SK-N-SH (cell line): ENCODE measurements at regions of chr1 and their contacts with region 1.

Region 1: DNA sequence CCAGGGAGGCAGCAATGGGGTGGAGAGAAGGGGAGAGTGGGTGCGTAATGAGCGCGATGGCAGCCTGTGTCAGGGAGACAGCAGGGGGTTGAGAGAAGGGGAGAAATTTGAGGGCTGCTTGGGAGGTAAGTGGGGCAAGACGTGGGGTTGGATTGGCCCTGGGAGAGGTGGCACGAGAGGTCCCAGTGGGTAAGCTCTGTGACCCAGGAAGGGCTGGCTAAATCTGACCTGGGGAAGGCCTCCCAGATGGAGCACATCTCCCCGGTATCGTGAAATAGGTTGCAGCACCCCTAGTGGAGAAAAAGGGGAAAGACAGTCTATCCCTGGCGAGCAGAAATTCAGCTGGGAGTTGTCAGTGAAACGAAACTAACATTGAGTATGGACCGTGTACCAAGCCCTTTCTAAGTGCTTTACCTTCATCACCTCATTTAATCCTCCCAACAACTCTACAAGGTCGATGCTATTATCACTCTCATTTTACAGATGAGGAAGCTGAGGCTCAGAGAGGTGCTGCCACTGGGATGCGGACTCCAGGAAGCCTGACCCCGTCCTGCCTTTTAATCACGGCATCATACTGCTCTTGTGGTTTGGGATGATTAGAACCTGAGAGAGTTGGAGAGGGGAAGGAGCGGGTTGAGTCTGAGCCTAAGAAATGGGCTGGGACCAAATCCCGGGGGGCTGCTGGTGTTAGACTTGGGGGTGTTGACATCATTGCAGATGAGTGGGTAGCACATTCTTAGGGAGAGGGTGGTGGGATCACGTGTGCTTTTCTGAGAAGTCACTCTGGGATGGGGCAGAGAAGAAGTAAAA is 56.6 kb upstream of the RPL11 start:
- DNase-seq: peak; percentile 84
- H3K4me3 ChIP-seq: peak overlapping the region; percentile 41 to 63
- H3K27ac ChIP-seq: peak overlapping the region; percentile 64 to 93
- H3K4me1 ChIP-seq: peaks cover 3 to 31% of the 10 kb centered on the region in 2 experiments; a peak in 2 of 4 replicates
- H3K27me3 ChIP-seq: no peaks in the 10 kb centered on the region
- CTCF ChIP-seq: peak; percentile 89
- EP300 ChIP-seq: no peak
- RAD21 ChIP-seq: peak; percentile 75

Region 2: DNA sequence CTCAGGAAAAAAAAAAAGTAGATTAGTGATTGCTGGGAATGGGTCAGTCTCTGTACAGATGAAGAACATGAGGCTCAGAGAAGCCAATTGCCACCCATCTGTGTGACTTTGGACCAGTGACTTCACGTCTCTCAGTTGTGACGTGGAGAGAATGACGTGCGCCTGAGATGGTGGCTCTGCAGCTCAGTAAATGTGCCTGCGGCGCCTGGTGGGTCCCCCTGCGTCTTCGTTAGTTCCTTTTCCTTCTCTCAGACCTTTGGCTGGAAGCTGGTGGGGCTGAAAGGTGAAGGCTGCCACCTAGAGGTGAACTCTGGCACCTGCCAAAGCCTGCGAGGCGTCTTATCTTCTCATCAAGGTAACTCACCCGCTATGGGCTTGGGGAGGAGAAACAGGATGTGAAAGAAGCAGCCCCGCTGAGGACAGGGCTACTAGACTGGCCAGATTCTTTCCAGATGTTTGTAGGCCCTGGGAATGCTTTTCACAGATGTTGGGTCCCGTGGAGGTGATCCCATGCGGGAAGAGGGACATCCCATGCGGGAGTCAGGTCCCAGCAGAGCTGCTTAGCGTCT is 95.3 kb before region 1 on chr1:
- CTCF ChIA-PET with region 1: interaction called, 708 read pairs
- POLR2A ChIA-PET with region 1: interaction called, 3 read pairs
- DNase-seq: peak; percentile 90
- H3K4me3 ChIP-seq: peak overlapping the region in 1 of 2 experiments; percentile 31; a peak in 1 of 4 replicates
- H3K27ac ChIP-seq: peak overlapping the region in 1 of 2 experiments; percentile 14; a peak in 1 of 4 replicates
- H3K4me1 ChIP-seq: peaks cover 4 to 9% of the 10 kb centered on the region in 2 experiments; a peak in 2 of 4 replicates
- H3K27me3 ChIP-seq: no peaks in the 10 kb centered on the region
- CTCF ChIP-seq: peak; percentile 97
- EP300 ChIP-seq: no peak
- RAD21 ChIP-seq: peak; percentile 94

Region 3: GRCh38 chr1:23577056-23578004 is 57.7 kb before region 1 on chr1:
- CTCF ChIA-PET with region 1: interaction called, 41 read pairs
- POLR2A ChIA-PET with region 1: no interaction called
- DNase-seq: no peak
- H3K4me3 ChIP-seq: peak overlapping the region in 1 of 2 experiments; percentile 46; a peak in 2 of 4 replicates
- H3K27ac ChIP-seq: peak overlapping the region; percentile 85 to 99
- H3K4me1 ChIP-seq: peaks cover 10 to 40% of the 10 kb centered on the region in 2 experiments
- H3K27me3 ChIP-seq: no peaks in the 10 kb centered on the region
- CTCF ChIP-seq: no peak
- EP300 ChIP-seq: peak in 1 of 2 experiments; percentile 57; a peak in 1 of 4 replicates
- RAD21 ChIP-seq: no peak

Region 4: DNA sequence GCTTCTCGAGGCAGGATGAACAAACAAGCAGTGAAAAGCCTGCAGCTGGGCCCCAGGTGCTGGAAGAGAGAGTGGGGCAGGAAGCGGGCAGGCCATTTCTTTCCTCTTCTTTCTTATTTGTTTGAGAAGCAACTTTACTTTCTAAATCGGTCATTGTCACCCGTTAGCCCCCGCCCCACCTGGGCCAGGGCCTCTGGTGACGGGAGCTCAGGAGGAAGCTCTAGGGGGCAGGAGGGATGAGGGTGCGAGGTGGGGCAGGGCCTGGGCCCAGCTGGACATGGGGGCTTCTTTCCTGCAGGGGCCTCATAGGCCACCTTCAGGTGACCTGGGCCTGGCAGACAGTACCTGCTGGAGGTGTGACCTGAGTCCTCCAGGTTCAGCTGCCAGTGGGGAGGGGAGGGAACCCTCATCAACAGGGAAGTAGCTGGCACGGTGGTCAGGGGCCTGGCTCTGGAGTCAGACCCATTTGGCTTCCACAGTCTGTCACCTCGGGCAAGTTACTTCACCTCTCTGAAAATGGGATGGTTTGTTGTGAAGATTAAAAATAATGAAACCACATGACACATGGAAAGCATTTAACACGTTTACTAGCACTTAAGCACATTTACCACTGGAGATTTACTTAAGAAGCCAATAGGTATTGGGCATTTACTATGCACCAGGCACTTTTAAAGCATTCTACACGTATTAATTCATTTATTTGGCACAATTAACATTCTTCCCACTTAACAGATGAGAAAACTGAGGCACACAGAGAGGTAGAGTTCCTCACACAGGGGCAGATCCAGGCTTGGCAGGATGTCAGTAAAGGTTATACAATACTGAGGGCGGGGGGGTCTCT is 21.6 kb before region 1 on chr1:
- CTCF ChIA-PET with region 1: interaction called, 78 read pairs
- POLR2A ChIA-PET with region 1: no interaction called
- DNase-seq: no peak
- H3K4me3 ChIP-seq: no peak overlapping the region
- H3K27ac ChIP-seq: no peak overlapping the region
- H3K4me1 ChIP-seq: peaks cover 0 to 2% of the 10 kb centered on the region in 2 experiments; a peak in 1 of 4 replicates
- H3K27me3 ChIP-seq: no peaks in the 10 kb centered on the region
- CTCF ChIP-seq: no peak
- EP300 ChIP-seq: no peak
- RAD21 ChIP-seq: no peak

Region 5: GRCh38 chr1:23657659-23658275 is 22.7 kb after region 1 on chr1:
- CTCF ChIA-PET with region 1: interaction called, 128 read pairs
- POLR2A ChIA-PET with region 1: no interaction called
- DNase-seq: peak; percentile 79
- H3K4me3 ChIP-seq: peak overlapping the region in 1 of 2 experiments; percentile 43; a peak in 1 of 4 replicates
- H3K27ac ChIP-seq: no peak overlapping the region
- H3K4me1 ChIP-seq: no peaks in the 10 kb centered on the region
- H3K27me3 ChIP-seq: no peaks in the 10 kb centered on the region
- CTCF ChIP-seq: peak; percentile 89
- EP300 ChIP-seq: no peak
- RAD21 ChIP-seq: peak; percentile 60

Region 6: DNA sequence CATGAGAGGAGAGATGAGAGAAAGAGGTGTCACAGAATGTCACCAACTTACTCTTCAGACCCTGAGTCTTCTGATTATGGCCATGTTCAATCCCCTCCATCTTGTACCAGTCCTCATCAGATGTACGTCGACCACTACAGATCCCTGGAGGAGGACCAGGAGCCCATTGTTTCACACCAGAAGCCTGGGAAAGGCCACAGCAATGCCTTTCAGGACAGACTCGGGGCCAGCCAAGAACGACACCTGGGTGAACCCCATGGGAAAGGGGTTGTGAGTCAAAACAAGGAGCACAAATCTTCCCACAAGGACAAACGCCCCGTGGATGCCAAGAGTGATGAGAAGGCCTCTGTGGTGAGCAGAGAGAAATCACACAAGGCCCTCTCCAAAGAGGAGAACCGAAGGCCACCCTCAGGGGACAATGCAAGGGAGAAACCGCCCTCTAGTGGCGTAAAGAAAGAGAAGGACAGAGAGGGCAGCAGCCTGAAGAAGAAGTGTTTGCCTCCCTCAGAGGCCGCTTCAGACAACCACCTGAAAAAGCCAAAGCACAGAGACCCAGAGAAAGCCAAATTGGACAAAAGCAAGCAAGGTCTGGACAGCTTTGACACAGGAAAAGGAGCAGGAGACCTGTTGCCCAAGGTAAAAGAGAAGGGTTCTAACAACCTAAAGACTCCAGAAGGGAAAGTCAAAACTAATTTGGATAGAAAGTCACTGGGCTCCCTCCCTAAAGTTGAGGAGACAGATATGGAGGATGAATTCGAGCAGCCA is 116.2 kb after region 1 on chr1:
- CTCF ChIA-PET with region 1: interaction called, 12 read pairs
- POLR2A ChIA-PET with region 1: no interaction called
- DNase-seq: peak; percentile 67
- H3K4me3 ChIP-seq: no peak overlapping the region
- H3K27ac ChIP-seq: no peak overlapping the region
- H3K4me1 ChIP-seq: peaks cover 0 to 10% of the 10 kb centered on the region in 2 experiments; a peak in 1 of 4 replicates
- H3K27me3 ChIP-seq: no peaks in the 10 kb centered on the region
- CTCF ChIP-seq: peak; percentile 74
- EP300 ChIP-seq: no peak
- RAD21 ChIP-seq: peak; percentile 65